ENCODE measurements at regions of chr16 and their contacts with region 1.

Region 1: DNA sequence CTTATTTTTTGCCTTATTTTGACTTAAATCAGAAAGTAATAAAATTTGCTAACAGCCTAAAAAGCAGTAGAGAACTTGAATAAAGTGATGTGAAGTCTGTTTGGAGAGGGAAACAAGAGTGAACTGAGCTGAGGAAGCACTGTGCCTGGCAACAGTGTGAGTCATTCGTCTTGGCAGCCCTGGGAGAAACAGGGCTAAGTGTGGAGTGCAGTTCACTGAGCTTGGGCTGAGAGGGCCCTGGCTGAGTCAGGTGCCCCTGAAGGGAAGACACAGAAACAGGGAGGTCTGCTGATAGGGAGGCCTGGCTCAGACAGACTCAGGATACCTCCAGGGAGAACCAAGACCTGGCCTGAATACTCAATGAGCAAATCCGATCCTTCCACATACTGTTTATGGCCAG is 132.1 kb downstream of the HS3ST4 start:
- DNase-seq: peak; percentile 59
- H3K4me3 ChIP-seq: no peak overlapping the region
- H3K27ac ChIP-seq: no peak overlapping the region
- H3K4me1 ChIP-seq: peaks cover 6% of the 10 kb centered on the region
- H3K27me3 ChIP-seq: no peaks in the 10 kb centered on the region
- CTCF ChIP-seq: no peak

Region 2: DNA sequence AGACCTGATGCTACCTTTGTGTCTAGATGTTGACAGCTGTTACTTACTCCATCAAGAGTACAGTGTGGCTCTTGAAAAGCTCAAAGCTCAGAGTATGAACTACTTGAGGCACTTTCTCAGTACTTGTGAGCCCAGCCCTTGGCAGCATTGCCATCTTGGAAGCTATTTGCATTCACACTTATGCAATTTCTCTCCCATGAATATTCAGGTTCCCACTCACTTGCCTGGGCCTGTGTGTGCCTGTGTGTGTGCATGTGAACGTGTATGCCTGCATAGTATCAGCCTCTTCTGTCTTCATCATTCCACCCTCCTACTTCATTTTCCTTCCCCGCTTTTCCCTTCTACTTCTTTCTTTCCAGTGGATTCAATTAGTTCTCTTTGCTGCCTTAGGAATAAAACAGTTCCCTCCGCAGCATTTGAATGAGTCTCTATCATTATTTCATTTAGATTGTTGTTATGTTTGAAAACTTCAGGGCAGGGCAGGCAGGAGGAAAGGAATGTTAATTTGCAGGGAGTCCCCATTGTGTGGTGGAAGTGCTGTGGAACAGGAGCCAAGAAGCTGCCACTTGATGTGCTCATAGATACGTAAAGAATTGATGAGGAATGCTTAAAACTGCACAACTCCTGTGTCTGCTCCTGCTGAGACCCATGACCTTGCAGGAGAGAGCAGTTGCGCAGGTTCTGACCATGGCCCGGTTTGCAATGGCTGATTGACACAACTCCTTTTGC is 73.2 kb before region 1 on chr16:
- CTCF ChIA-PET with region 1: interaction called, 16 read pairs
- POLR2A ChIA-PET with region 1: no interaction called
- intact Hi-C with region 1: no loop called
- DNase-seq: peak; percentile 70
- H3K4me3 ChIP-seq: no peak overlapping the region
- H3K27ac ChIP-seq: peak overlapping the region; percentile 85
- H3K4me1 ChIP-seq: peaks cover 42% of the 10 kb centered on the region
- H3K27me3 ChIP-seq: no peaks in the 10 kb centered on the region
- CTCF ChIP-seq: no peak

Region 3: GRCh38 chr16:25978218-25978617 is 154.3 kb after region 1 on chr16:
- CTCF ChIA-PET with region 1: no interaction called
- POLR2A ChIA-PET with region 1: no interaction called
- intact Hi-C with region 1: no loop called
- DNase-seq: no peak
- H3K4me3 ChIP-seq: no peak overlapping the region
- H3K27ac ChIP-seq: no peak overlapping the region
- H3K4me1 ChIP-seq: no peaks in the 10 kb centered on the region
- H3K27me3 ChIP-seq: no peaks in the 10 kb centered on the region
- CTCF ChIP-seq: no peak

Region 4: GRCh38 chr16:26016989-26017388 is 193.1 kb after region 1 on chr16:
- CTCF ChIA-PET with region 1: no interaction called
- POLR2A ChIA-PET with region 1: no interaction called
- intact Hi-C with region 1: no loop called
- DNase-seq: no peak
- H3K4me3 ChIP-seq: no peak overlapping the region
- H3K27ac ChIP-seq: no peak overlapping the region
- H3K4me1 ChIP-seq: no peaks in the 10 kb centered on the region
- H3K27me3 ChIP-seq: no peaks in the 10 kb centered on the region
- CTCF ChIP-seq: no peak